ENCODE measurements at regions of chr16 and their contacts with region 1.

Region 1: DNA sequence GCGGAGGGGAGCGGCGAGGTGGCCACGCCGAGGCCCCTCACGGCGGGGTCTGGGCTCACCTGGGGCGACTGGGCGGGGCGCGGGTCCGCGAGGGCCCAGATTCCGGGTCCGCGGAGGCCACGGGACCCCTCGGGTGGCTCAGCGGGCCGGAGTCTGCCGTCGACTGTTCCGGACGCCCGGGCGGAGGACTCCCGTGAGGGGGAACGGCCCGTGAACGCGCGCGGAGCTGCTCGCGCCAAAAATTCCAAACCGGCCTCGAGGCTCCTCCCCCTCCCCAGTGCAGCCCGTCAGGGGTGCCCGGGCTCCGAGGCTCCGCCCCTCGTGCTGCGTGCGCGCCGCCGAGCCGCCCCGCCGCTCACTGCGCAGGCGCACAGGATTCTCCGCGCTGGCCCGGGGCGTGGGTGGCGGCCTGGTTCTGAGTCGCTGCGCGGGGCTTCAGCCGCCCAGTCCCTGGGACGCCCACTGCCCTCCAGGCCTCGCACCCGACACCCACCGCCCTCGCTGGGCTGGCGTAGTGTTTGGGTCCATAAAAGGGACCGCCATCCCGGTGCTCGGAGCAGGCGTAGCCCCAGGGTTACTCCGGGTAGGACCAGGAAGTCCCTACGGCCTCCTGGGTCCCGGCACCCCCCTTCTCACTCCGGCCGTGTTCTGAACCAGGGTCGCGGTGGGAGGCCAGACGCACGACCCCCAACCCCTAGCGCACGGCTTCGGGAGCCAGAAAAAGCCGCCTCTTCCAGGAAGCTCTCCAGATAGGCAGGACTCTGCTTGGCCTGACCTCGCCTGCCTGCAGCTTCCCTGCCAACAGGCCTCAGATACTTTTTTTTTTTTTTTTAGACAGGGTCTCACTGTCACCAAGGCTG is at the start of gene PKMYT1:
- DNase-seq: peak; percentile 87 to 97 (median 95)
- H3K4me3 ChIP-seq: peak within 1 kb of the TSS; percentile 57 to 73
- H3K4me3 Mint-ChIP-seq: peak within 1 kb of the TSS; percentile 77 to 85 (median 84)
- H3K27ac ChIP-seq: peak within 1 kb of the TSS; percentile 84
- H3K27ac Mint-ChIP-seq: peak within 1 kb of the TSS; percentile 55 to 89 (median 75)
- H3K4me1 ChIP-seq: peaks cover 16% of the 10 kb centered on the region
- H3K4me1 Mint-ChIP-seq: peaks cover 0 to 14% (median 6%) of the 10 kb centered on the region in 4 donors
- H3K27me3 ChIP-seq: no peaks in the 10 kb centered on the region
- H3K27me3 Mint-ChIP-seq: peaks cover 2% of the 10 kb centered on the region in 2 donors
- total RNA-seq, gene PKMYT1: 0.79 TPM in 1 of 2 experiments, not detected in the other

Region 2: GRCh38 chr16:2960183-2961032 is 20.0 kb before region 1 on chr16:
- CTCF ChIA-PET with region 1: interaction called, 4 read pairs
- POLR2A ChIA-PET with region 1: interaction called, 49 read pairs
- intact Hi-C with region 1: loop called (anchors 1 kb)
- DNase-seq: peak in 1 of 5 donors; percentile 7
- H3K4me3 ChIP-seq: no peak overlapping the region
- H3K4me3 Mint-ChIP-seq: no peak overlapping the region
- H3K27ac ChIP-seq: no peak overlapping the region
- H3K27ac Mint-ChIP-seq: no peak overlapping the region
- H3K4me1 ChIP-seq: peaks cover 37% of the 10 kb centered on the region
- H3K4me1 Mint-ChIP-seq: peaks cover 7 to 24% (median 14%) of the 10 kb centered on the region in 4 donors
- H3K27me3 ChIP-seq: peaks cover 4% of the 10 kb centered on the region
- H3K27me3 Mint-ChIP-seq: peaks cover 14 to 22% of the 10 kb centered on the region in 2 donors

Region 3: DNA sequence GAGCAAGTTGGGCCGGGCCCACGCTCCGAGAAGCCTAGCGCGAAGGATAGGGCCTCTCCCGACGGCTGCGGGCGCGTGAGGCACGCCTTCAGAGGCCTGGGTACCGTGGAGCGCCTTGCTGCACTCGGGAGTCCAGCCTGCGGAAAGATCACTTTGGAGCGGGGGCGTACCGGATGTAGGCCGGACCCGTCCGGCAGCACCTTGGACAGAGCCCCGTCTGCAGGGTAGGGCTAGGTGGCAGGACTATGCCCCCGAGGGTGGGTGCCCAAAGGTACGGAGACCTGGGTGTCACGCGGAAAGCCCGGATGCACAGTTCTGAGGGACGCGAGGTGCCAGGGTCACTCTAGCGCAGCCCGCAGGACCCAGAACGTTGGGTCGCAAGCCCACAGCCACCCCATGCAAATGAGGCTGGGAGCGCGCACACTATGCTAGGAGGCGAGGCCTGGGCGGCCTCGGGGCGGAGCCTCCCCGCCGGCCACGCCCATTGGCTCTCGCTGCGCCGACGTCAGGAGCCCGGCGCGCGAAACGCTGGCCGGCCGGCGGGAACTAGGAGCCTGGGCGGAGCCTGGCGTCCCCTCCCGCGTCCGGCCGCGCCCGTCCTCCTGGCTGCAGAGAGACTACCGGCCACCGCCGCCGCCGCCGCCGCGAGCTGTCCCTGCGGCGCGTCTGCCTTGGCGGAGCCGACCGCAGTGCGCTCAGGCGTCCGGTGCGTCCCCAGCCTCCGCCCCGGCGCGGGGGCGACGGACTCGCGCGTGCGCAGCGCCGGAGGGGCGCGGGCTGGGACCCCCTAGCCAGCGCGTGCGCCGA is 11.5 kb before region 1 on chr16 and contains the start of gene PAQR4:
- CTCF ChIA-PET with region 1: interaction called, 5 read pairs
- POLR2A ChIA-PET with region 1: interaction called, 49 read pairs
- intact Hi-C with region 1: loop called (anchors 1 kb)
- DNase-seq: peak; percentile 67 to 79 (median 76)
- H3K4me3 ChIP-seq: peak within 1 kb of the TSS; percentile 28 to 64
- H3K4me3 Mint-ChIP-seq: peak within 1 kb of the TSS; percentile 68 to 84 (median 78)
- H3K27ac ChIP-seq: peak within 1 kb of the TSS; percentile 26
- H3K27ac Mint-ChIP-seq: peak within 1 kb of the TSS in 3 of 7 donors; percentile 52 to 78 (median 62)
- H3K4me1 ChIP-seq: peaks cover 44% of the 10 kb centered on the region
- H3K4me1 Mint-ChIP-seq: peaks cover 3 to 33% (median 20%) of the 10 kb centered on the region in 4 donors
- H3K27me3 ChIP-seq: peaks cover 23% of the 10 kb centered on the region
- H3K27me3 Mint-ChIP-seq: peaks cover 8 to 15% of the 10 kb centered on the region in 2 donors
- total RNA-seq, gene PAQR4: 1.5 to 1.7 TPM